Motor neuron (in vitro differentiated cells): ENCODE measurements at regions of chr1 and their contacts with region 1.

Region 1: GRCh38 chr1:32870615-32871363 is at the start of gene FNDC5:
- ATAC-seq: peak; percentile 48 to 83 (median 52)
- H3K4me3 ChIP-seq: peak within 1 kb of the TSS; percentile 46 to 54 (median 52)
- H3K27ac ChIP-seq: peak within 1 kb of the TSS; percentile 83
- H3K4me1 ChIP-seq: peaks cover 19 to 30% of the 10 kb centered on the region in 2 donors
- total RNA-seq, gene FNDC5: 1.0 to 297 (median 49.6) TPM

Region 2: DNA sequence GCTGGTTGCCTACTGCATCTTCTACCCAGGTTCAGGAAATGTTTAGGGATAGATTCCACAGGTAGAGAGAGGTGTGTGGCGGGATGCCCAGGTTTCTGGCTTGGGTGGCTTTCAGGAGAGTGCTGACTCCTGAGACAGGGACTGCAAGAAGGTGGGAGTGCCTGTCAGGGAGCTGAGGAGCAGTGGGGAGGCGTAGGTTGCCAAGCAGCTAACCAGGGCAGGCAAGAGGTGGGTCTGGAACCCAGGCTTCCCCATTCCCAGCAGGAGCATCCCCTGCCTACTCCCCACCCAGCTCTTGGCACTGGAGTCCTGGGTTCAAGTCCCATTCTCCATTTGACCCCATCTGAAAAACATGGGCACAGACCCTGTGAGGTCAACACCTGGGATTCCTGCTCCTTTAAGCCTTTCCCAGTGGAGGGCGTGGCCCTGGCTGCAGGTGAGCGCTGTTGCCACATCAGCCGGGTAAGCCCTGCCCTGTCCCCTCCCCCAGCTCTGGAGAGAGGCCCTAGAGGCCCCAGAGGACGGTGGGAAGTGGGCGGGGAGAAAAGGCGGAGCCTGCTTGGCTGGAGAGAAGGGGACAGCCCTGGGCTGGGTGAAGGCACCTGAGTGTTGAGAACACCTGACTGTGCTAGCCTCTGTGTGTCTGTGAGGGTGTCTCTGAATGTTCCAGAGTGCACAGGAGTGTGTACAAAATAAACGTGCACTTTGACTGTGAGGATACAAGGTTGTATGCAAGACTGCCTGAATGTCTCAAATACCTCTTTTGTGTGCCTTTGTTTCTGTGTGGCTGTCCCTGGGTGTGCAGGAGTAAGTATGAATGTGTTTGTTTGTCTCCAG is 154.3 kb before region 1 on chr1:
- in situ Hi-C with region 1: loop called in 1 of 9 experiments (anchors 25 kb)
- ATAC-seq: peak; percentile 20 to 98 (median 97)
- H3K4me3 ChIP-seq: peak overlapping the region in 1 of 5 donors; percentile 18
- H3K27ac ChIP-seq: peak overlapping the region in 1 of 2 donors; percentile 52
- H3K4me1 ChIP-seq: peaks cover 11 to 13% of the 10 kb centered on the region in 2 donors